Heart right ventricle (tissue), 16 donors: ENCODE measurements at regions of chr4 and their contacts with region 1.

Region 1: DNA sequence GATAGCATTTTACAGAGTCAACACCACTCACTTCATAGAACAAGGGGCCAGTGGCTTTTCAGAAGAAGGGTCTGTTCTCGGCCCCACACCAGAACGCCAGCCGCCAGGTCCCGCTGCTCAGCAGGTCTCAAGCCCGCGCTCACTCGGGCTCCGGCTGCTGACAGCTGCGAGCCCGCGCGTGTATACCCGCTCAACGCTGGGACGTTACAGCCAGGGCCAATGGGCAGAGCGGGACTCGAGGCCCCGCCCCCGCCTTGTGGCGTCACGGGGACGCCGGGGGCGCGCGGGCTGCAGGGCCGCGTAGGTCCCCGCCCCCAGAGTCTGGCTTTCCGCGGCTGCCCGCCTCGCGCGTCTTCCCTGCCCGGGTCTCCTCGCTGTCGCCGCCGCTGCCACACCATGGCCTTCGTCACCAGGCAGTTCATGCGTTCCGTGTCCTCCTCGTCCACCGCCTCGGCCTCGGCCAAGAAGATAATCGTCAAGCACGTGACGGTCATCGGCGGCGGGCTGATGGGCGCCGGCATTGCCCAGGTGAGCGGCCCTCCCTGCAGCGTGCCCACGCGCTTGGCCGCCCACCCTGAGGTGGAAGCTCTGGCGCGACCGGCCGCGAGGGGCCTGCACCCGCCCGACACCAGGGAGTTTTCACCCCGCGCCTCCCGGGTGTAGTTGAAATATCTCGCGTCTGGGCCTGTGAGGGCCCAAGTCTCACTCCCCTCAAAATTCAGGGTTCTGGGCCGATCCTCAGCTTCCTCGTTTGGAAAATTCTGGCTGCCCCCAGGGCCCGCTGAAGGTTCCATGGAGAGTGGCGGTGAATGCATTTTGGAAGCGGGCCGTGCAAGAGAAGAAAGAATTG is at the start of gene HADH:
- DNase-seq: peak; percentile 94 to 95
- ATAC-seq: peak; percentile 98 to 100 (median 99)
- H3K4me3 ChIP-seq: peak within 1 kb of the TSS; percentile 51 to 93 (median 88)
- H3K27ac ChIP-seq: peak within 1 kb of the TSS; percentile 53 to 96 (median 92)
- H3K4me1 ChIP-seq: peaks cover 0 to 57% (median 51%) of the 10 kb centered on the region in 9 donors
- H3K27me3 ChIP-seq: no peaks in the 10 kb centered on the region
- CTCF ChIP-seq: no peak
- total RNA-seq, gene HADH: 163 to 295 (median 238) TPM

Region 2: GRCh38 chr4:107719922-107720722 is 269.6 kb before region 1 on chr4 and contains the start of gene PAPSS1:
- intact Hi-C with region 1: loop called in 1 of 10 experiments (anchors 1 kb)
- DNase-seq: peak; percentile 96 to 97
- ATAC-seq: peak; percentile 98 to 100 (median 99)
- H3K4me3 ChIP-seq: peak within 1 kb of the TSS; percentile 53 to 100 (median 92)
- H3K27ac ChIP-seq: peak within 1 kb of the TSS in 9 of 10 donors; percentile 73 to 90 (median 84)
- H3K4me1 ChIP-seq: peaks cover 0 to 23% (median 14%) of the 10 kb centered on the region in 9 donors
- H3K27me3 ChIP-seq: no peaks in the 10 kb centered on the region
- CTCF ChIP-seq: no peak
- total RNA-seq, gene PAPSS1: 8.5 to 18.9 (median 10.7) TPM

Region 3: GRCh38 chr4:107896158-107897045 is 93.4 kb before region 1 on chr4:
- intact Hi-C with region 1: no loop called
- DNase-seq: no peak
- ATAC-seq: peak in 5 of 8 donors; percentile 39 to 88 (median 70)
- H3K4me3 ChIP-seq: no peak overlapping the region
- H3K27ac ChIP-seq: peak overlapping the region in 2 of 10 donors; percentile 9 to 41
- H3K4me1 ChIP-seq: peaks cover 0 to 32% (median 8%) of the 10 kb centered on the region in 9 donors
- H3K27me3 ChIP-seq: no peaks in the 10 kb centered on the region
- CTCF ChIP-seq: no peak

Region 4: GRCh38 chr4:107930821-107931774 is 58.7 kb before region 1 on chr4 and contains the start of gene CYP2U1:
- intact Hi-C with region 1: loop called in 6 of 10 experiments (anchors 2 to 10 kb)
- DNase-seq: peak; percentile 88 to 92
- ATAC-seq: peak; percentile 97 to 99 (median 98)
- H3K4me3 ChIP-seq: peak within 1 kb of the TSS; percentile 63 to 95 (median 84)
- H3K27ac ChIP-seq: peak within 1 kb of the TSS; percentile 14 to 90 (median 85)
- H3K4me1 ChIP-seq: peaks cover 4 to 37% (median 15%) of the 10 kb centered on the region in 9 donors
- H3K27me3 ChIP-seq: peaks cover 0 to 3% (median 0%) of the 10 kb centered on the region in 7 donors
- CTCF ChIP-seq: peak in 5 of 9 donors; percentile 5 to 45 (median 37)
- total RNA-seq, gene CYP2U1: 5.6 to 10.2 (median 6.7) TPM

Region 5: GRCh38 chr4:107937040-107937785 is 52.5 kb before region 1 on chr4:
- intact Hi-C with region 1: loop called in 6 of 10 experiments (anchors 2 to 10 kb)
- DNase-seq: no peak
- ATAC-seq: no peak
- H3K4me3 ChIP-seq: no peak overlapping the region
- H3K27ac ChIP-seq: no peak overlapping the region
- H3K4me1 ChIP-seq: peaks cover 4 to 23% (median 8%) of the 10 kb centered on the region in 9 donors
- H3K27me3 ChIP-seq: peaks cover 0 to 3% (median 0%) of the 10 kb centered on the region in 7 donors
- CTCF ChIP-seq: no peak